AG04449 (cell line): ENCODE measurements at regions of chrX and their contacts with region 1.

Region 1: GRCh38 chrX:24838629-24839028 is 144.9 kb downstream of the POLA1 start:
- DNase-seq: no peak
- H3K4me3 ChIP-seq: no peak overlapping the region
- CTCF ChIP-seq: peak; percentile 5

Region 2: DNA sequence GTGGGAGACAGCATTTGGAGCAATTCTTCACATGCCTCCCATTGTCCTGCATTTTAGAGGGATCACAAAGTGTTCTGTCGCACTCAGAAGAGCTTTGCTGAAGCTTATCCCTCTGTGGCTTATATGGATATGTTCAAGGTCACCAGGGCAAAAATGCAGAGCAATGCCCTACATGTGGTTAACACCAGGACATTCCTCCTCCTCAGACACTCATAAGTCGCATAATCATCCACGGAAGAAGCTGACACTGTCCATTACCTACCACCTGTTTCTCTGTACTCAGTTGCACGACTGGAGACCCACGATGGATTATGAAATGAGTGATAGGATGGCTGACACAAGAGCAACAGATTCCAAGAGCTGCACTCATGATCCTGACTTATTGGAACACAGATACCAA is 1240.1 kb before region 1 on chrX:
- CTCF ChIA-PET with region 1: no interaction called
- POLR2A ChIA-PET with region 1: no interaction called
- DNase-seq: no peak
- H3K4me3 ChIP-seq: no peak overlapping the region
- CTCF ChIP-seq: no peak

Region 3: DNA sequence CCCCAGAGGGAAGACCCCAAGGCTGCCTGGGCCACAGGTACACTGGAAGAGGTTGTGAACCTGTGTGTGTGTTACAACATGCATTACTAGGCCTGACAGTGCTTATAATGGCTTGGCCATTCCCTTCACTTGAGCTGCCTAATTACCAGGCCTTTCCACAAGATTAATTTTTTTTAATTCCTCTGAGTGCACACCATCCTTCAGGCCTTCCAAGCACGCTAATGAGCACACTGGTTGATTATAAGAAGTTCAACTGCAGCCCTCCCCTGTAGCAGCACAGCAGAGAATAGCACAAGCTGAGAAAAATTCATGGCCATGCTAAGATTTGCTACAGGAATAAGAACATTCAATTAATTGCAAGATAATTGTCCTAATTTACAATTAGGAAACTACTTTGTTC is 522.5 kb before region 1 on chrX:
- CTCF ChIA-PET with region 1: no interaction called
- POLR2A ChIA-PET with region 1: no interaction called
- DNase-seq: no peak
- H3K4me3 ChIP-seq: no peak overlapping the region
- CTCF ChIP-seq: no peak

Region 4: DNA sequence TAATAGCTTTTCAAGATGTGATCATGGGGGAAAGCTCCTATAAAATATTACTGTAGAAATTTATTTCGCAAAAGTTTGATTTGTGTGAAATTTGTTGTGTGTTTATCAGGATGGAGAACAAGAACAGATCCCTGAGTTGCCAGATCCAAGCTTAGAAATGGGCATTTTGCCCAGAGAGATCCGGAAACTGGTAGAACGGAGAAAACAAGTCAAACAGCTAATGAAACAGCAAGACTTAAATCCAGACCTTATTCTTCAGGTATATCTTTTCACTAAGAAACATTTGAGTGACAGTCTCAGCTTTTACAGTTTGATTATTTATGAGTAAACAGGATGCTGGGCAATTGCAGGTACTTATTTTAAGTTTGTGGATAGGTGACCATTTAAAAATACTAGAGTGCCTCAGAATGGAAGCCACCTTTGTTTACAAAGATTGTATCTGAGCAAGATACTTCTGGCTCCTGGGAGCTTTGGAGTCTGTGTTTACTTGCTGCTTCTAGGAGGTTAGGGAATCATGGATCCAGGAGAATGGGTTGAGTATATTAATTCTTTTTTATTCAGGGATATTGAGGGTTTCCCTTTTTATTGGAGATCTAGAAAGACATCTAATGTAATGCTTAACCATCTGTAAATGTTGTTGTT is 90.3 kb before region 1 on chrX:
- CTCF ChIA-PET with region 1: interaction called, 15 read pairs
- POLR2A ChIA-PET with region 1: no interaction called
- DNase-seq: no peak
- H3K4me3 ChIP-seq: no peak overlapping the region
- CTCF ChIP-seq: no peak

Region 5: DNA sequence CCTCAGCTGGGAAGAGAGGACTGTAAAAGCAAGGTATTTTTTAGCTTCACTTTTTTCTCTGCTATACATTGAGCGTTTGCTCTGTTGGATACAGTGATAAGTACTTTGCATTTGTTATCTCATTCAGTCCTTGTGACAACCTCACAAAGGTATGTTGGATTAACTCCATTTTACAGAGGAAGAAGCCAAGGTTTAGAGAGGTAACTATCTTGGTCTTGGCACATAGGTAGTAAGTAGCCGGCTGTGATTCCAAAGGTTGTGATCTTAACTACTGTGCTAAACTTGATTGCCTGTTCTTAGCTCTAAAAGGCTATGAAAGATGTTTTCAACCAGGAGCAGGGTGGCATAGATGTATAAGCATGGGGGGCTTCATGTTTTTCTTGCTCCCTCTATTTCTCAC is 10.5 kb before region 1 on chrX:
- CTCF ChIA-PET with region 1: interaction called, 26 read pairs
- POLR2A ChIA-PET with region 1: no interaction called
- DNase-seq: no peak
- H3K4me3 ChIP-seq: no peak overlapping the region
- CTCF ChIP-seq: no peak

Region 6: DNA sequence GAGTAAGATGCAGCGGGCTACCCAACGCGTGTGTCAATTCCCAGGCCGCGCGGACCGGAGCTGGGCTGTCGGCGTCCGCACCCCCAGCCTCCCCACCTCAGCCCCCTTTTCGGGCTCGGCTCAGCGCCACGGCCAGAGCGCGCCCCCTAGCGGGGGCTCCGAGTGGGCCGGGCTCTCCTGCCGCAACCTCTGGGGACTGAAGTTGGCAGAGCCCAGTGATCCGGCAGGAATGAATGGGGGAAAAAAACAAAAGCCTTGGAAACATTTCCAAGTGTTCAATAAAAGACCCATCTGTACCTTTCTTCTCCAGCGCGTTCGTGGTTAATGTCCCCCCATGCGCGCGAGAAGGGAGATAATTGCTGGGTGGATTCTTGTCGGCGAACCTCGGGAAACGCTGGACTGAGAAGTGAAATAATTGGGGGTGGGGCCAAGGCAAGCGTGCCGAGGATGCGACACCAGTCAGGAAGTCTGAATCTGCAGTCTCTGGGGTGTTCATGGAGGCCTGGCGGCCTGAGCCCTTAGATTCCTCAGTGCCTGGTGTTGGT is 182.3 kb after region 1 on chrX:
- CTCF ChIA-PET with region 1: interaction called, 19 read pairs
- POLR2A ChIA-PET with region 1: no interaction called
- DNase-seq: no peak
- H3K4me3 ChIP-seq: no peak overlapping the region
- CTCF ChIP-seq: peak; percentile 52

Region 7: GRCh38 chrX:25144043-25144940 is 305.7 kb after region 1 on chrX:
- CTCF ChIA-PET with region 1: interaction called, 97 read pairs
- POLR2A ChIA-PET with region 1: no interaction called
- DNase-seq: no peak
- H3K4me3 ChIP-seq: peak overlapping the region; percentile 33
- CTCF ChIP-seq: peak; percentile 47